Activated naive CD4-positive, alpha-beta T cell treated with anti-CD3 and anti-CD28 coated beads for 36 hours (primary cell): ENCODE measurements at regions of chr10 and their contacts with region 1.

Region 1: GRCh38 chr10:43671656-43672531 is 23.2 kb upstream of the ZNF32 start:
- DNase-seq: peak; percentile 62
- H3K4me3 Mint-ChIP-seq: no peak overlapping the region
- H3K27ac Mint-ChIP-seq: no peak overlapping the region
- H3K4me1 Mint-ChIP-seq: peaks cover 3% of the 10 kb centered on the region
- H3K27me3 Mint-ChIP-seq: peaks cover 32% of the 10 kb centered on the region

Region 2: DNA sequence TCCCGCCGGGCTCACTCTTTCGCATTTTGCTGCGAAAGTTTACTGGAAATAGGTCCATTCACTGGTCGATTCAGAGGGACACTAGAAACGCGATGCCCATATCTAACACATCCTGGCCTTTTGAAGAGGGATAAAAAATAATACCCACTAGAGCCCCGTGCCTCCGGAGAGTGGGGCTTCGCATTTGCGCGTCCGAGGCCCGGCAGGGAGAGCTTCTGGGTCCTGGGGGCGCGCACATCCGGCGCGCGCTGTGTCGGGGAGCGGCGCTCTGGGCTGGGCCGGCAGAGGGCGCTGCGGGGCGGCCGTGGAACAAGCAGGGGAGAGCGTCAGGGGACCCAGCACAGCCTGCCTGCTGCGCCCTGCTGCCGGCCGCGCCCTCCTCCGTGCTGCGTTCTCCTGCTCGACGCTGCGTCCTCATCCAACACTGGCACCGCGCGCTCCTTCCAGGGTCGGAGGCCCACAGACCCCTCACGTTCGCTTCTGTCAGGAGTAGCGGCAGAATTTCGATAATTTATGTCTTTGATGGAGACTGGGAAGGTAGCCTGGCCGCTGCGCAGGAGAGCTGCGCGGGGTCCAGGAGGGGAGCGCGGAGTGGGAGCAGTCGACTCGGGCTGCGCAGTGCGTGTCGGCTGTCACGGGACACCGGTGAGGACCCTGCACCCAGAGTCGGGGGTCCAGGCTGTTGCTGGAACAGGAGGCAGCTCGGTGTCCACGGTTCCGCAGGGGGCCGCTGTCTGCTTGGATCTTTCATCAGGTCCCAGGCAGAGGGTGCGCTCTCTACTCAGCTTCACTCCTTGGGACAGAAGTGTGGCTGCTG is 18.3 kb after region 1 on chr10:
- CTCF ChIA-PET with region 1: interaction called, 14 read pairs
- intact Hi-C with region 1: no loop called
- DNase-seq: peak; percentile 87
- H3K4me3 Mint-ChIP-seq: peak overlapping the region; percentile 77
- H3K27ac Mint-ChIP-seq: no peak overlapping the region
- H3K4me1 Mint-ChIP-seq: peaks cover 5% of the 10 kb centered on the region
- H3K27me3 Mint-ChIP-seq: peaks cover 12% of the 10 kb centered on the region

Region 3: DNA sequence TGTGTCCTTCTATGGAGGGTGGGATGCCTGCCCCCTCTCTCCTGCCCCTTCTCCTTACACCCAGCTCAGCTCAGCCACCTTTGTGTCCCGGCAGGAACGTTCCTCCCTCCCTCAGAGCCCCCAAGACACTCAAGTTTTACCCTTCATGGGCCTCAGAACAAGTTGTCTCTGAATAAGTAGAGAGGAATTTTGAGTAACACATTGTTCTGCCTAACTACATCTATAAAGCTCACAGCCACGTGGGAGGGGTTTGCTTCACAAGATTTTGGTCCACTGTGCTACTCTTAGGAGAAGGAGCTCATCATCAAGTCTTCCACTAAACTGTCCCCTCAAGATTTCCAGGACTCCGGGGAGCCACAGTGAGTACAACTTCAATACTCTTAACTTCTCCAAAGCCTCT is 28.4 kb after region 1 on chr10:
- CTCF ChIA-PET with region 1: no interaction called
- intact Hi-C with region 1: no loop called
- DNase-seq: no peak
- H3K4me3 Mint-ChIP-seq: no peak overlapping the region
- H3K27ac Mint-ChIP-seq: no peak overlapping the region
- H3K4me1 Mint-ChIP-seq: no peaks in the 10 kb centered on the region
- H3K27me3 Mint-ChIP-seq: no peaks in the 10 kb centered on the region

Region 4: DNA sequence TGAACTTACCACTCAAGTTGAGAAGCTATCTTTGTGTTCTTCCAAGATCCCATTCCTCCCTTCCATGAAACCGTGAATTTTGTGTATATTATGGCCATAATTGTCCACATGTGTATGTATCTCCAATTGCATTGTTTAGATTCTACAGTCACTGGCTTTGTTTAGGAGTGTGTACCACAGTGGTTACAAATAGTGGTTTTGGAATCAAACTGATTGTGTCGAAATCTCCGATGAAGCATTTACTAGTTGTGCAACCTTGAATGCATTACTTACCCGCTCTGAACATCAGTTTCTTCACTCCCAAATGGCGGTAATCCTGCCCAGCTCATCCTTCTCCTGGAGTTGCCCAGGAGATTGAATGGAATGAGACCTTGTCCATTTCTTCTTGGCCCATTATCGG is 121.8 kb after region 1 on chr10:
- CTCF ChIA-PET with region 1: no interaction called
- intact Hi-C with region 1: no loop called
- DNase-seq: no peak
- H3K4me3 Mint-ChIP-seq: no peak overlapping the region
- H3K27ac Mint-ChIP-seq: no peak overlapping the region
- H3K4me1 Mint-ChIP-seq: peaks cover 4% of the 10 kb centered on the region
- H3K27me3 Mint-ChIP-seq: no peaks in the 10 kb centered on the region

Region 5: DNA sequence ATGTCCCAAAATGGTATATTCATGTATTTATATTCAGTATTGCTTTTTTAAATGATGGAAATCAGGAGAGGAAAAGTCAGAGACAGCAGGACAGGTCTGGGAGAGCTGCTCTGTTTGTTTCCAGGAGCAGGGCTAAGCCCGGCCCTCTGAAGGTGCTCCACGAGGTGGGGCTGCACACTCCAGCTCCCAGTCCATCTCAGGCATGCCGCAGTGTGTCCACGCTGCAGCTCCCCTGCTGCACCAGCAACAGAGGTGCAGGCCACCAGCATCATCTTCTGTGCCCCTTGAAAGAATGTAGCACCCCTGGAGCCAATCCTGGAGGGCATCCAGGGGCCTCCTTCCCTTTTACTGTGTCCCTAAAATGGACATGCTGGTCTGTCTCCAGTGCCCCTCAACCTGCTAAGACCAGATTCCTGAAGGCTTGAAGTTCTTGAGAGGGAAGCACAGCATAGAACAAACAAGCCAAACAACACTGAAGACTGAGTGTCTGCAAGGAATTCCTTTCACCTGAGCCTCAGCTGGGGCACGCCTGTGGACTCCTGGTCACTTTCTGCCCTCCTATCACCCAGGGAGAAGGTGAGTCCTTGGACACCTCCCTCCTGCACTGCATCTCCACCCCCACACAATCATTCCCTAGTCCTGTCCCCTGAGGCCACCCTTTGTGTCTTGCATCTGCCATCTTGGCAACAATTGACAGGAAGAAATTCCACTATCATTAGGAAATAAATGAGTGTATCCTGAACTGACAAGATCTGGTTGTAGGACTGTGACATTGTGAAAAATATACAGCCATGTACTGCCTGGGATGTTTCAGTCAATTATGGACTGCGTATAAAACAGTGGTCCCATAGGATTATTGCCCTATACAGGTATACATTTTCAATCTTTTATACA is 612.5 kb after region 1 on chr10:
- CTCF ChIA-PET with region 1: no interaction called
- intact Hi-C with region 1: no loop called
- DNase-seq: no peak
- H3K4me3 Mint-ChIP-seq: no peak overlapping the region
- H3K27ac Mint-ChIP-seq: no peak overlapping the region
- H3K4me1 Mint-ChIP-seq: no peaks in the 10 kb centered on the region
- H3K27me3 Mint-ChIP-seq: peaks cover 17% of the 10 kb centered on the region

Region 6: GRCh38 chr10:44310762-44311562 is 639.1 kb after region 1 on chr10:
- CTCF ChIA-PET with region 1: no interaction called
- intact Hi-C with region 1: loop called (anchors 1 kb)
- DNase-seq: peak; percentile 76
- H3K4me3 Mint-ChIP-seq: no peak overlapping the region
- H3K27ac Mint-ChIP-seq: no peak overlapping the region
- H3K4me1 Mint-ChIP-seq: peaks cover 8% of the 10 kb centered on the region
- H3K27me3 Mint-ChIP-seq: peaks cover 13% of the 10 kb centered on the region

Region 7: DNA sequence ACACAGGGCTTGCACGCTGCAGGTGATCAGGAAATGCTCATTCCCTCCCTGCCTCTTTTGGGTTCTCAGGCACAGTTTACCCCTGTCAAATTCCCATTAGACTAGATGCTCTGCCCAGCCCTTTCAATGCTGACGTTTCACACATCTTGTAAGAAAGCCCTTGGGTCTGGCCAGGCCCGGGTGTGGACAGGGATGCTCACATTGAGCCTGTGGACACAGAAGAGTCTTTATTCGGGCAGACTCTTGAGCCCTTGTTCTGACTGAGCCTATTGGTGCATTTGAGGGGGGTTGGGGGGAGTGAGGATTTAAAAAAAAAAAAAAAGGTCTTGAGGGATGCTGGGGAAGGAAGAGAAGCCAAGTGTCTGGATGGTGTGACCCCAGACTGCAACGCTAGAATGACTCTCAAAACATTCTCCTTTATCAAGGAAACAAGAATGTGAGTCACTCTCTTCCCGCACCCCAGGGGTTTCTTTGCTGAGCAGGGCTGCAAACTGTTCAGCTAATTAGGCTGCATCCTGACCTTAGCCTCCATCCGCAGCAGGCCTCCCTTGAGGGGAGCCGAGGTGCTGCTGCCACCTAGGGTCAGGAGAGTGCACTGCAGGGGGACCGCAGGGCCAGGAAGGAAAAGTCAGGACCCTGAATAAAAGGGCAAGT is 1185.6 kb after region 1 on chr10:
- CTCF ChIA-PET with region 1: interaction called, 3 read pairs
- intact Hi-C with region 1: loop called (anchors 1 kb)
- DNase-seq: peak; percentile 76
- H3K4me3 Mint-ChIP-seq: no peak overlapping the region
- H3K27ac Mint-ChIP-seq: no peak overlapping the region
- H3K4me1 Mint-ChIP-seq: no peaks in the 10 kb centered on the region
- H3K27me3 Mint-ChIP-seq: peaks cover 3% of the 10 kb centered on the region